ENCODE measurements at regions of chr12 and their contacts with region 1.

Region 1: GRCh38 chr12:128076188-128076587 is 190.8 kb upstream of the TMEM132C start:
- DNase-seq: no peak
- ATAC-seq: no peak
- H3K4me3 ChIP-seq: no peak overlapping the region
- H3K27ac ChIP-seq: no peak overlapping the region
- H3K4me1 ChIP-seq: no peaks in the 10 kb centered on the region
- H3K27me3 ChIP-seq: peaks cover 0 to 8% (median 0%) of the 10 kb centered on the region in 7 donors
- CTCF ChIP-seq: no peak

Region 2: GRCh38 chr12:126518596-126519200 is 1557.5 kb before region 1 on chr12:
- intact Hi-C with region 1: loop called in 1 of 10 experiments (anchors 10 kb)
- DNase-seq: no peak
- ATAC-seq: no peak
- H3K4me3 ChIP-seq: no peak overlapping the region
- H3K27ac ChIP-seq: no peak overlapping the region
- H3K4me1 ChIP-seq: no peaks in the 10 kb centered on the region
- H3K27me3 ChIP-seq: no peaks in the 10 kb centered on the region
- CTCF ChIP-seq: no peak

Region 3: GRCh38 chr12:128133321-128134073 is 57.3 kb after region 1 on chr12:
- intact Hi-C with region 1: no loop called
- DNase-seq: no peak
- ATAC-seq: no peak
- H3K4me3 ChIP-seq: no peak overlapping the region
- H3K27ac ChIP-seq: no peak overlapping the region
- H3K4me1 ChIP-seq: no peaks in the 10 kb centered on the region
- H3K27me3 ChIP-seq: peaks cover 0 to 7% (median 0%) of the 10 kb centered on the region in 7 donors
- CTCF ChIP-seq: no peak

Region 4: GRCh38 chr12:128204711-128205110 is 128.5 kb after region 1 on chr12:
- intact Hi-C with region 1: no loop called
- DNase-seq: no peak
- ATAC-seq: no peak
- H3K4me3 ChIP-seq: no peak overlapping the region
- H3K27ac ChIP-seq: no peak overlapping the region
- H3K4me1 ChIP-seq: no peaks in the 10 kb centered on the region
- H3K27me3 ChIP-seq: peaks cover 0 to 4% (median 0%) of the 10 kb centered on the region in 7 donors
- CTCF ChIP-seq: no peak

Measured in heart right ventricle (tissue), 16 donors.